Dorsolateral prefrontal cortex (tissue), 120 donors: ENCODE measurements at regions of chr3 and their contacts with region 1.

Region 1: DNA sequence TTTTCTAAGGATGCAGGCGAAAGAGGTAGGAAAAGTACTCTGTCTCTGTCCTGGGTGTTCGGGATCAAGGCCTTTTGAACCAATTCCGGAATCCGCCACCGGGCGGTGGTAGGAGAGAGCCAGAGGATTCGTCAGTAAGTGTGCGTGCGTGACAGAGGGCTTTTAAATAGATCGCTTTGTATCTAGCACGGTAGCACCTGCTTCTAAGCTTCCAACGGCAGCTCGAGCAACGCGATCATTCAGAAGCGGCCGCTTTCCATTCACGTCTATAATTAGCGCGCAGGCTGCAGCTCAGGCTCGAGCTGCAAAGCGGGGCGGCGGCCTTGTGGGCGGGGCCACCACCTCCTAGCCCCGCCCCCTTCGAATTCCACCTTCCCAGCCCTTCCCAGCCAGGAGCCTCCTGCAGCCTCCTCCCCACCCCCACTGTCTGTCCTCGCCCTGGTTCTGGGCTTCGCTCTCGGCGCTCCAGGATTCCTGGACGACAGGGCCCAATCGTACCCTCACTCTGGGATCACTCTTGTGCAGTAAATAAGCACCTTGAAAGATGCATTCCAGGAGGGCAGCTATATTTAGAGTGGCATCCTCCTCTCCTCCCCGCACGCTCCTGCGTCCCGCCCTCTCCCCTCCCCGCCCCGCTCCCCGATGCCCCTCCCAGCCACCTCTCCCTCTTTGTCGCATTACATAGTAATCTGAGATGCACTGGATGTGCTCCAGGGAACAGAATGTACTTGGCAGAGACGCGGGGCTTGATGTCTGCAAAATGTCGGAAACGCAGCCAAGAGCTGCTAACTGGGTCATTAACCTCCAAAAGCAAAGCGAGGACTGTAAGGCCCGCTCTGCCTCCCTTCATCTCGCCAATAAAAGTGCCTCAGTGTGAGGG is 224.1 kb upstream of the TPRG1 start:
- DNase-seq: peak; percentile 79 to 96 (median 88)
- H3K4me3 ChIP-seq: peak overlapping the region; percentile 19 to 71 (median 56)
- H3K27ac ChIP-seq: peak overlapping the region; percentile 84 to 100 (median 97)
- H3K27me3 ChIP-seq: no peaks in the 10 kb centered on the region
- CTCF ChIP-seq: peak in 53 of 56 donors; percentile 19 to 66 (median 48)

Region 2: DNA sequence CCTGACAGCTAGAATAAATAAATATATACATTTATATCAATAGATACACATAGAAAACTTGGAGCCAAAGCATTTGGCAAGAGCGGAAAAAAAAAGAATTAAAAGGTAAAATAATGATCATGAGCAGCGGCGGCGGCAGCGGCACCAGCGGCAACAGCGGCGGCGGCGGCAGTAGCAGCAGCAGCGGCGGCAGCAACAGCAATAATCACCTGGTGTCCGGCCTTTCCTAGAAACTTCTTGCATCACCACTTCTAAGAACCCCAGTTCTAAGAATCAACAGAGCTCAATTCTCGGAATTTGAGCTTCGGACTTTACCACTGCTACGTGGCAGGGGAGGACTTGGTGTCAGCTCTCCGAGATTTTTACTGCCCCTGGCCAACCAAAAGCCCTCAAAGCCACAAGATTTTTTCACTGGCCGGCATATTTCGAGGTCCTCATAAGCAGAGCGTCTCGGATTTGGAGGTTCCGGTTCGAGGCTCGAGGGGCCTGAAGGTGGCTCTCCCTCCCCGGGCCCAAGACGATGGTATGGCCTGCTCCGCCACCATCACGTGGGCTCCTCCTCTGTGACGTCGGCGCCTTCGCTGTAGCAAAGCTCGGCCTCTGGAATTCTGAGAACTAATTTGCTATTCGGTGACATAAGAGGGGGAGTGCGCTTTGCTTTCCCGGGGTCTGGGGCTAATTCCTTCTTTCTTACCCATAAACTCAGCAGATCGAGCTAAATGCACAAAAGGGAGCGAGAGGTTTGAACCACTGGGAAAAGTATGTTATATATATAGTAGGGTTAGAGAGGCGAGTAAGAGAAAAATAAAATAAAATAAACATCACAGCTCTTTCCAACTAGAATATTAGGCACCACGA is 1202.2 kb before region 1 on chr3 and contains the start of gene BCL6:
- intact Hi-C with region 1: loop called in 1 of 2 experiments (anchors 2 kb)
- DNase-seq: peak; percentile 82 to 92 (median 90)
- H3K4me3 ChIP-seq: peak within 1 kb of the TSS; percentile 55 to 98 (median 83)
- H3K27ac ChIP-seq: peak within 1 kb of the TSS; percentile 87 to 100 (median 99)
- H3K27me3 ChIP-seq: no peaks in the 10 kb centered on the region
- CTCF ChIP-seq: peak in 13 of 56 donors; percentile 1 to 27 (median 9)
- total RNA-seq, gene BCL6: 47.6 to 270 (median 94.0) TPM

Region 3: DNA sequence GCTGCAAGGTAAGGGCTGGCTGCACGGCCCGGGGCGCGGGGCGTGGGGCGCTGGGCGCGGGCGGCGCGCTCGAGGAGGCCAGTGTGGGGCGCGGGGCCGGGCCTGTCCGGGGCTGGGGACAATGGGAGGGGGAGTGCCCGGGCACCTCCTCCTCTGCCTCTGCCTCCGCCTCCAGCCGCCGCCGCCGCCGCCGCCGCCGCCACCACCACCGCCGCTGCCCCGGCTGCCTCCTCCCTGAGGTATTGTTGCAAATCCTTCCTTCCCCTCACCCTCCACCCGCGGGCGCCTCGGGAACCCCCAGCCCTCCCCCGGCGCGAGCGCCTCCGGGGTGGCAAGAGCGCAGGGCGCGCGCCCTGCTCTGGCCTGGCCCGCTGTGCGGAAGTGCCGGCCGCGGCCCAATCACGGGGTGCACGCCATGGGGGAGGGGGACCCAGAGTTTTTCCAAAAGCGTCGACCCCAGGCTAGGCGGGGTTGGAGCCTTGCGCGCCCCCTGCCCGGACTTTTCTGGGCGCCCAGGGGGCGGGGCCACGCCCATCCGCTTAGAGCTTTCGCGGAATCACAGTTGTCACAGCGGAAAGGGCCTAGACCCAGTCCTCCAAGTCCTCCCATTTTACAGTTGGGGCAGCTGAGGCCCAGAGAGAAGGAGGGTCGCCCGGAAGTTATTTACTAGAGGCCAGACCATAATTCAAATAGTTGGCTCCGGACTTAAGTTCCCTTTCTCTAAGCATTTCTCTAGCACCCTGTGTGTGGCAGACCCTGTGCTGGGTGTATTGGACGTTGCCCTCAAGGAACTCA is 793.4 kb before region 1 on chr3 and contains the start of gene LPP:
- intact Hi-C with region 1: loop called (anchors 5 to 10 kb)
- DNase-seq: peak; percentile 28 to 81 (median 54)
- H3K4me3 ChIP-seq: peak within 1 kb of the TSS; percentile 63 to 94 (median 84)
- H3K27ac ChIP-seq: peak within 1 kb of the TSS; percentile 35 to 94 (median 83)
- H3K27me3 ChIP-seq: no peaks in the 10 kb centered on the region
- CTCF ChIP-seq: peak in 21 of 56 donors; percentile 4 to 35 (median 14)
- total RNA-seq, gene LPP: 32.7 to 187 (median 61.2) TPM

Region 4: DNA sequence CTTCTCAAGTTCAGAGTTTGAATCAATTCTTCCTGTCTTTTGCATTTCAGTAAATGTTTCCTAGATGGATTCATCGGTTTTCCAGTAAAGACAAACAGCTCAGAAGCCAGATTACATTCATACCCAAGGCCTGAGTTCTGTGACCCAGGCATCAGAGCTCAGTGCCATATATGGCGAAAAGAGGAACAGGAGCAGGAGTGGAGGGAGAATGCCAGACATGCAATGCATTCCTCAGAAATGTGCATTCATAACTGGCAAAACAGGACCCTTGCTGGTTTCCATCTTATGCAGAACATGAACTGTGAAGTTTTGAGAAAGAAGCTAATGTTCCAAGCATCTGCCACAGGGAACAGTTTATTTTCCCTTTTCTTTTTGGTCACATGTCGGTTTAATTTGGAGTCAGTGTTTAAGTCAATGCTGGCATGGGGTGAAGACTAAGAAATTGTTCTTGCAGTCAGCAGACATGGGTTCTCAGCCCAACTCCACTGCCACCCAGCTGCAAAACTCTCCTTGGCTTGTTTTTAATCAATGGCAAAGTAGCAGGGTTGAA is 677.1 kb before region 1 on chr3:
- intact Hi-C with region 1: loop called in 1 of 2 experiments (anchors 10 kb)
- DNase-seq: no peak
- H3K4me3 ChIP-seq: peak overlapping the region in 4 of 59 donors; percentile 8 to 29 (median 22)
- H3K27ac ChIP-seq: peak overlapping the region in 52 of 59 donors; percentile 2 to 75 (median 50)
- H3K27me3 ChIP-seq: no peaks in the 10 kb centered on the region
- CTCF ChIP-seq: peak in 17 of 56 donors; percentile 8 to 46 (median 19)

Region 5: DNA sequence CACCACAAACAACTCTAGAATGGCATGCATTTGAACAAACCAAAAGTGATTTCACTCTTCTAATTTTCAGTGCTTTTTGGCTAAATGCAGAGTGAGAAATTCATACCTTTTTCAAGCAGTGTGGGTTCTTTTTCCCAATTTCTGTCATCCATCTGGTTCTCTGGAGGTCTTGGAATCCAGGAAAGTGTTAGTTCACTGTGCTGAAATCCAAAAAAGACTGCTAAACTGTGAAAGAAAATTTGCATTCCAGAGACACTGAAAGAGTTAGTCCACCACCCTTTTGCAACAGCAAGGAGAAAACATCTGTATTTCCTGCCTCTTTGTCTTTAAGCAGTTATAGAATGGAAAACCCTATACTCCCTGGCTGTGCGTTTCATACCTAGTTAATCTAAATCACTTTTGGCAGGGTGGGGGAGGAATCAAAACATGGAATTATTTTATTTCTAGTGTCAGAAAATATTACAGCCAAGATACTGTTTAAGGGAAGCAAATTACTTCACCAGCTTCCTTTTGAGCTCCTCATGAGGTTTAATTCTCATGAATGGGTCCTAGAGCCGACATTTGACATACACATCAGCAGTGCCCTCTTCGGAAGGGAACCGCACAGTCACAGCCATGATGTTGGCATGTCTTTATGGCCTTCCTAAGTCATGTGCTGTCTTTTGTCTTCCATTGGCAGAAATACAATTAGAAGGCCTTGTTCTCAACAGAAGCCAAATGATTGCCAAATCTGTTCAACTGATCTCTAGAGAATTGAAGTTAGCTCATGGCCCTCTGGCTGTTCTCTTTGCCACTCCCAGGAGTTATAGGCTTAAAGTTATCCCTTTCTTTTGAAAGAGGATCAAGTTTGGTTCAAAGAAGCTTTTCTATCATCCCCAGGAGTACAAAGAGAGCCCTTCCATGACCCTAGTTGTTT is 93.5 kb before region 1 on chr3:
- intact Hi-C with region 1: loop called in 1 of 2 experiments (anchors 2 kb)
- DNase-seq: peak in 1 of 10 donors; percentile 10
- H3K4me3 ChIP-seq: peak overlapping the region in 2 of 59 donors; percentile 1
- H3K27ac ChIP-seq: peak overlapping the region in 55 of 59 donors; percentile 12 to 86 (median 69)
- H3K27me3 ChIP-seq: no peaks in the 10 kb centered on the region
- CTCF ChIP-seq: peak in 17 of 56 donors; percentile 5 to 60 (median 21)

Region 6: GRCh38 chr3:188863999-188864406 is 83.6 kb before region 1 on chr3:
- intact Hi-C with region 1: loop called in 1 of 2 experiments (anchors 10 kb)
- DNase-seq: no peak
- H3K4me3 ChIP-seq: no peak overlapping the region
- H3K27ac ChIP-seq: no peak overlapping the region
- H3K27me3 ChIP-seq: no peaks in the 10 kb centered on the region
- CTCF ChIP-seq: no peak